ENCODE measurements at regions of chr2 and their contacts with region 1.

Region 1: GRCh38 chr2:155235710-155236109 is 537.2 kb downstream of the KCNJ3 start:
- DNase-seq: no peak

Region 2: DNA sequence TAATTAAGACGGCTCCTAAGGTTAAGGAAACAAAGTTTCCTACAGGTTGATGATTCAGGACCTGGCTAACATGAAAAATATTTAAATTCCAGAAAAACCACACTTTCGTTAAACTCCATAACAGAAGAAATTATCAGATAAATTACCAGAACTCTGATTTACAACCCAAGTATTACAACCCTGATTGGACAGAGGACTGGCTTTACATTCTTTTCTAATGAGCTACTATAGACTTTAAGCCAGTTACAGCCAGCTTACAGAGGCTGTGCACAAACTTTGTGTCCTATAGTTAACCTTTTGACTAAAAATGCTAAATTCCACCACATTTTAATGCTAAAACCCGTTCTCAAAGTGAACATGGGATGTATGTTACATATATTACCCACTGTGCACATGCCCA is 78.6 kb before region 1 on chr2:
- intact Hi-C with region 1: no loop called
- DNase-seq: no peak

Region 3: GRCh38 chr2:155218292-155218924 is 17.3 kb before region 1 on chr2:
- intact Hi-C with region 1: loop called in 1 of 2 experiments (anchors 1 kb)
- DNase-seq: no peak